ENCODE measurements at regions of chr3 and their contacts with region 1.

Region 1: DNA sequence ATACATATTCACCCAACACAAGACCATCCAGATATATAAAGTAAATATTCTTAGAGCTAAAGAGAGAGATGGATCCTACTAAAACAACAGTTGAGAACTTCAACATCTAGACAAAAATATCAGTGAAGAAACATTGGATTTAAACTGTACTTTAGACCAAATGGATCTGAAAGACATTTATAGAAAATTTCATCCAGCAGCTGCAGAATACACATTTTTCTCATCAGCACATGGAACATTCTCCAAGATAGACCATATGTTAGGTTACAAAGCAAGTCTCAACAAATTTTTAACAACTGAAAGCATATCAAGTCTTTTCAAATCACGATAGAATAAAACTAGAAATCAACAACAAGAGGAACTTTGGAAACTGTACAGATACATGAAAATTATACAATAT is 369.0 kb upstream of the CCDC54 start:
- DNase-seq: no peak
- ATAC-seq: no peak
- H3K4me3 Mint-ChIP-seq: no peak overlapping the region
- H3K27ac Mint-ChIP-seq: no peak overlapping the region
- H3K4me1 Mint-ChIP-seq: no peaks in the 10 kb centered on the region
- H3K27me3 Mint-ChIP-seq: no peaks in the 10 kb centered on the region

Region 2: DNA sequence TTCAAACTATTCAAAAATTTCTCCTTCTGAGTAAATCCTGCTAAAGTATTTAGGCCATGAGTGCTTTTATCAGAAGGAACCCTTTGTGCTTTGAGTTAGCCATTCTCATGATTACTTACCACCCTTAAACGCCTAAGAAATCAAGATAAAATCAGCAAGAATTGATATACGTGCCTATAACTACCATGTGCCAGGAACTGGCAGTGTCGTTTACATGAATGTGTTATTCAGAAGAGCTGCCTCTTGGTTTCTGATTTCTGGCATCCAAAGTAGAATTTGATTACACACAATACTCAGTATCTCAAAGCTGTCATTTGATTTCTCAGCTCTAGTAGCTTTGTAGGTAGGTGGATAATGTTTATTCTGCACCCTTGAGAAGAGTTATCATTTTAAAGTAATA is 17.7 kb after region 1 on chr3:
- CTCF ChIA-PET with region 1: no interaction called
- POLR2A ChIA-PET with region 1: no interaction called
- intact Hi-C with region 1: loop called in 1 of 2 experiments (anchors 2 kb)
- DNase-seq: no peak
- ATAC-seq: no peak
- H3K4me3 Mint-ChIP-seq: no peak overlapping the region
- H3K27ac Mint-ChIP-seq: no peak overlapping the region
- H3K4me1 Mint-ChIP-seq: no peaks in the 10 kb centered on the region
- H3K27me3 Mint-ChIP-seq: peaks cover 3% of the 10 kb centered on the region

Region 3: DNA sequence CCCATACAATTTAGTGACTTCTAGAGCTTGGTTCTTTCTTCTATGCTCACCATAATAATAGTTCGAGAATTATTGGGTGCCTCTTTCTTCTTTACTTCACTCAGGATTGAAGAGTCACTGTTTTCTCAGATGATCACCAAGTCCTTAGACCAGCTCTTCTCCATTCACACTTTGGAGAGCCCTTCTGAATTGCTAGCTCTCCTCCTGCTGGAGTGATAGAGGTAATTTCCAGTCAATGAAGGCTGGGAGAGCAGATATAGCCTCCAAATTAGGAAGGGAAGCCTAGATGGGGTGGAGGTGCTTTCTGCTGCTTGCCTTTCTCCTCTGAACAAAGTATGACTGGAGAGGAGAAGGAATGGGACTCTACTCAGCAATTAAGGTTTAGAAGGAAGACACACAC is 503.9 kb after region 1 on chr3:
- CTCF ChIA-PET with region 1: no interaction called
- POLR2A ChIA-PET with region 1: no interaction called
- intact Hi-C with region 1: no loop called
- DNase-seq: no peak
- ATAC-seq: no peak
- H3K4me3 Mint-ChIP-seq: no peak overlapping the region
- H3K27ac Mint-ChIP-seq: no peak overlapping the region
- H3K4me1 Mint-ChIP-seq: no peaks in the 10 kb centered on the region
- H3K27me3 Mint-ChIP-seq: peaks cover 11% of the 10 kb centered on the region